A549 (cell line): ENCODE measurements at regions of chr3 and their contacts with region 1.

Region 1: GRCh38 chr3:49929331-49930240 is at the start of gene MON1A:
- DNase-seq: peak; percentile 64 to 86
- ATAC-seq: peak; percentile 95 to 96
- H3K4me3 ChIP-seq: peak within 1 kb of the TSS; percentile 68
- H3K27ac ChIP-seq: peak within 1 kb of the TSS; percentile 83 to 87
- H3K4me1 ChIP-seq: peaks cover 17% of the 10 kb centered on the region; the same call in 2 of the 3 replicates
- CTCF ChIP-seq: peak; percentile 25
- EP300 ChIP-seq: no peak
- POLR2A ChIP-seq: peak; percentile 22
- RAD21 ChIP-seq: 0 out of 5 replicates have a peak, but pooled peaks of 1 of the 2 experiments have one; percentile 29
- polyA plus RNA-seq, gene MON1A: 4.2 and 5.1 TPM in 2 replicates

Region 2: DNA sequence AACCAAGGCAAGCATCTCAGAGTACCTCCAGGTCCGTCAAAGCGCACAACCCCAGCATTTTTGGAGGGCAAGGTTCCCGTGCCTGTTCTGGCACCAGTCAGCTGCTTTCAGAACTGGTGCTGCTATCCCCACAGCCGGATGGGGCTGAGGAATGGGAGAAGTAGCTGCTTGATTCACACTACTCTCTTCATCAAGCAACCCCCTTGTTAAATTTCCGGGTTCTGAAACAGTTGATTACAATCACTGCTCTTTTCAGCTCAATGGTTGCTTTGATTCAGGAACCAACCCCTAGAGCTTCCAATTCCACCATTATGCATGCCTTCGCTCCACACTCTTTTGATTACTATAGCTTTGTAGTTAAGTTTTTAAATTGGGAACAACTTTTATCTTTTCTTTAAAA is 103.6 kb before region 1 on chr3:
- CTCF ChIA-PET with region 1: no interaction called
- POLR2A ChIA-PET with region 1: no interaction called
- DNase-seq: no peak
- ATAC-seq: no peak
- H3K4me3 ChIP-seq: no peak overlapping the region
- H3K27ac ChIP-seq: no peak overlapping the region
- H3K4me1 ChIP-seq: no peaks in the 10 kb centered on the region
- CTCF ChIP-seq: no peak
- EP300 ChIP-seq: no peak
- POLR2A ChIP-seq: no peak
- RAD21 ChIP-seq: no peak

Region 3: GRCh38 chr3:49939858-49940666 is 10.5 kb after region 1 on chr3 and contains the start of gene RBM6:
- CTCF ChIA-PET with region 1: interaction called, 5 read pairs
- POLR2A ChIA-PET with region 1: interaction called, 23 read pairs
- DNase-seq: peak; percentile 95 to 98
- ATAC-seq: peak; percentile 99
- H3K4me3 ChIP-seq: peak within 1 kb of the TSS; percentile 79
- H3K27ac ChIP-seq: peak within 1 kb of the TSS; percentile 93 to 94
- H3K4me1 ChIP-seq: 0 out of 3 replicates have a peak, but pooled peaks cover 3% of the 10 kb centered on the region
- CTCF ChIP-seq: no peak
- EP300 ChIP-seq: no peak
- POLR2A ChIP-seq: peak; percentile 52
- RAD21 ChIP-seq: no peak
- polyA plus RNA-seq, gene RBM6: 42.2 and 44.2 TPM in 2 replicates